Endothelial cell of umbilical vein (primary cell): ENCODE measurements at regions of chr6 and their contacts with region 1.

Region 1: DNA sequence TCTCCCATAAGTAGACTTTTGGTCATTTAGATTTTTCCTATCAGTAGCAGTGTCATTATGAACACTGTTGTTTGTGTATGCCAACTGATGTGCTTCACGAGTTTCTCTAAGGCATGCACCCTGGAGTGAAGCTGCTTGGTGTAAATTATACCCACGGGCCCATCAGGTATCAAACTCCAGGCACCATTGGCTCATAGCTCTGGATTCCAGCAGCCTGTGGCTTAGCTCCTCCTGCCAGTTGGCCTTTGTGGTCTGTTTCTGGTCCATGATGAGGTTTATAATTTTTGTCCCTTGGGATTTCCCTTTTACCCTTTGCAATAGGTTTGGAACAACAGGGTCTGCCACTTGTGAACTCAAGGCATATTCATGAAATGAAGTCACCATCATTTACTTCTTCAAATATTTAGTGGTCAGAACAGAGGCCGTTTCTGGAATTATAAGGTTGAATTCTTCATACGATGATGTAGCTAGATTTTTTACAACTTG is 350.5 kb downstream of the PRL start:
- DNase-seq: no peak
- H3K4me3 ChIP-seq: no peak overlapping the region
- H3K27ac ChIP-seq: no peak overlapping the region
- H3K4me1 ChIP-seq: peaks cover 51% of the 10 kb centered on the region
- H3K27me3 ChIP-seq: no peaks in the 10 kb centered on the region
- CTCF ChIP-seq: no peak
- POLR2A ChIP-seq: no peak

Region 2: DNA sequence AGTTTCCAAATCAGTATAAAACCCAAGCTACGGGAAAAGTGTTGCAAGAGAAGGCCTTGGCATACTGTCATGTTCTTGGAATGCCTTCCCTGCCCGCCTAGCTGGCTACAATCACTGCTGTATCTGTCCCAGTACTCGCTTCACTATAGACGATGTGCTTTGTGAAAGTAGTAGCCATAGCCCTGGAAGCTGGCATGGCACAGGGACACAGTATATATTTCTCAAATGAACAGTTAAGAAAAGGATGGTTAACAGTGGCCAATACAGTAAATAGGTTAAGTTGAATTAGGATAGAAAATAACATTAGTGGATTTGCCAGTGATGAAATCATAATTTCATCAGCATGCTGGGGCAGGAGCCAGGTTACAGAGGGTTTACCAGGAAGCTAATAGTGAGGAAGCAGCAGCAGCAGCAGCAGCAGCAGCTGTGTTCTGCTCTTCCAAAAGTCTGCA is 912.7 kb before region 1 on chr6:
- CTCF ChIA-PET with region 1: no interaction called
- POLR2A ChIA-PET with region 1: no interaction called
- dilution Hi-C with region 1: no loop called
- intact Hi-C with region 1: loop called (anchors 10 kb)
- DNase-seq: peak; percentile 27
- H3K4me3 ChIP-seq: no peak overlapping the region
- H3K27ac ChIP-seq: no peak overlapping the region
- H3K4me1 ChIP-seq: no peaks in the 10 kb centered on the region
- H3K27me3 ChIP-seq: no peaks in the 10 kb centered on the region
- CTCF ChIP-seq: no peak
- POLR2A ChIP-seq: no peak

Region 3: DNA sequence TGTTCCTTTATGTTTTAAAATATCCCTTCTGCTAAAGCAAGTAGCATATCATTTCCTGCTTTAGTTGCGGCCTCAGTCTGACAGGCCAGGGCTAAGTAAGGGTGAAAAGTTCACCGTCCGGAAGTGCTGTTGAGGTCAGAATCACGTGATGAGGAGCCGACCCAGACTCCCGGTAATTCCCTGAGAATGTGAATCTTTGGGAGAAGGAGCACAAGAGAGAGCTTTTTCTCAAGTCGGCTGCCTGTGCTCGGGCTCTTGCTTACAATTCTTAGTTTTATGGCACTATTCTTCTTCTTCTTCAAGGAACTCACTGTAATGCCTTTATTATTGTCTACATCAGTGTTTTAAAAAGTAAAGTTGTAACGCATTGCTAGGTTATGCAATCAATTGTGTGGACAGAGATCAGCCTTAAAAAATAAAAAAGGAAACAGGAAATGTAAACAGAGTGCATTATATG is 41.2 kb after region 1 on chr6:
- CTCF ChIA-PET with region 1: interaction called, 3 read pairs
- POLR2A ChIA-PET with region 1: no interaction called
- dilution Hi-C with region 1: no loop called
- intact Hi-C with region 1: loop called (anchors 1 kb)
- DNase-seq: peak; percentile 96
- H3K4me3 ChIP-seq: peak overlapping the region in 1 of 3 experiments; percentile 26
- H3K27ac ChIP-seq: peak overlapping the region; percentile 88
- H3K4me1 ChIP-seq: peaks cover 33% of the 10 kb centered on the region
- H3K27me3 ChIP-seq: no peaks in the 10 kb centered on the region
- CTCF ChIP-seq: no peak
- POLR2A ChIP-seq: peak; percentile 21